ENCODE measurements at regions of chr21 and their contacts with region 1.

Region 1: GRCh38 chr21:38355992-38356797 is 99.4 kb downstream of the KCNJ15 start:
- DNase-seq: peak; percentile 89
- ATAC-seq: peak; percentile 90

Region 2: GRCh38 chr21:38159355-38159754 is 196.8 kb before region 1 on chr21:
- intact Hi-C with region 1: loop called (anchors 2 kb)
- DNase-seq: peak; percentile 47
- ATAC-seq: peak; percentile 65

Region 3: GRCh38 chr21:38219049-38219628 is 137.1 kb before region 1 on chr21:
- intact Hi-C with region 1: loop called (anchors 5 kb)
- DNase-seq: peak; percentile 60
- ATAC-seq: peak; percentile 84